OCI-LY7 (cell line): ENCODE measurements at regions of chr15 and their contacts with region 1.

Region 1: GRCh38 chr15:90387537-90388461 is at the start of gene IQGAP1:
- DNase-seq: peak; percentile 98
- H3K4me3 ChIP-seq: peak within 1 kb of the TSS; percentile 84
- H3K27ac ChIP-seq: peak within 1 kb of the TSS; percentile 71
- H3K4me1 ChIP-seq: peaks cover 27% of the 10 kb centered on the region
- CTCF ChIP-seq: no peak
- total RNA-seq, gene IQGAP1: 98.7 and 147 TPM in 2 replicates

Region 2: DNA sequence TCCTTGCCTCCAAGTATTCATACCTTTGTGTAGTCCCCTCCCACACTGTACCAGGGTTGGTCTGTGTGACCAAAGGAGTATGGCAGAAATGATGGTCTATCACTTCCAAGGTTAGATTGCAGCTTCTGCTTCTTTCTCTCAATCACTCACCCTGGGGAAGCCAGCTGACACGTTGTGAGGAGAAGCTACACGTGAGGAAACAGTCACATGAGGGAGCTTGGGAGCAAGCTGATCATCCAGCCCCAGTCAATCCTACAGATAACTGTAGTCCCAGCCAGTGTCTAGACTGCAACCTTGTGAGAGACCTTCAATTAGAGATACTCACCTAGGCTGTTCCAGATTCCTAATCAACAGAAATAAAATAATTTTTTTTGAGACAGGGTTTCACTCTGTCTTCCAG is 41.9 kb before region 1 on chr15:
- CTCF ChIA-PET with region 1: no interaction called
- POLR2A ChIA-PET with region 1: no interaction called
- intact Hi-C with region 1: no loop called
- DNase-seq: no peak
- H3K4me3 ChIP-seq: no peak overlapping the region
- H3K27ac ChIP-seq: no peak overlapping the region
- H3K4me1 ChIP-seq: peaks cover 9% of the 10 kb centered on the region
- CTCF ChIP-seq: no peak

Region 3: GRCh38 chr15:90376789-90377188 is 11.0 kb before region 1 on chr15:
- CTCF ChIA-PET with region 1: interaction called, 3 read pairs
- POLR2A ChIA-PET with region 1: interaction called, 25 read pairs
- intact Hi-C with region 1: no loop called
- DNase-seq: peak; percentile 33
- H3K4me3 ChIP-seq: no peak overlapping the region
- H3K27ac ChIP-seq: no peak overlapping the region
- H3K4me1 ChIP-seq: peaks cover 10% of the 10 kb centered on the region
- CTCF ChIP-seq: no peak

Region 4: GRCh38 chr15:90407871-90408317 is 20.1 kb after region 1 on chr15:
- CTCF ChIA-PET with region 1: no interaction called
- POLR2A ChIA-PET with region 1: interaction called, 10 read pairs
- intact Hi-C with region 1: no loop called
- DNase-seq: no peak
- H3K4me3 ChIP-seq: no peak overlapping the region
- H3K27ac ChIP-seq: no peak overlapping the region
- H3K4me1 ChIP-seq: peaks cover 13% of the 10 kb centered on the region
- CTCF ChIP-seq: no peak

Region 5: GRCh38 chr15:90519688-90520087 is 131.9 kb after region 1 on chr15:
- CTCF ChIA-PET with region 1: no interaction called
- POLR2A ChIA-PET with region 1: no interaction called
- intact Hi-C with region 1: no loop called
- DNase-seq: no peak
- H3K4me3 ChIP-seq: no peak overlapping the region
- H3K27ac ChIP-seq: no peak overlapping the region
- H3K4me1 ChIP-seq: no peaks in the 10 kb centered on the region
- CTCF ChIP-seq: no peak